ENCODE measurements at regions of chr10 and their contacts with region 1.

Region 1: DNA sequence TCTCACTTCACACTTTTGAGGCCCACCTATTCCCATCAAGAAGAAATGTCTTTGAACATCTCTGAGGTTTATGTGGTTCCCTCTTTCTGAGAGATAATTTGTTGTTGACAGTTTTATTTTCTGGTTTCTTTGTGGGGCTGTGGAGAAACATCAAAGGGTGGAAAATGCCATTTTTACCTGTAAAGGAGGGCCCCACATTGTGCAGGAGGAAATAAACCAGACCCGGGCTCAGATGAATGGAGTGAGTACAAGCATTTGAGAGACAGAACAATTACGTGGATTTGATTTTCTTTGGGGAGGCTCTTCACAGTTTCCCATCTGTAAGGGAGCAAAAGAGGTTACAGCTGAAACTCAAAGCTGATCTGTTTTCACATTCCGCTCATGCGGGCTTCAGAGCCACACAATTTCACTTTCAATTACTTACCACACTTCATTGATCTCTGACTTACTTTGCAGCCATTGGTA is 29.8 kb downstream of the ITPRIP start:
- DNase-seq: no peak
- H3K4me3 ChIP-seq: no peak overlapping the region
- H3K27ac ChIP-seq: peak overlapping the region in 1 of 2 experiments; percentile 26; a peak in 1 of 4 replicates
- H3K4me1 ChIP-seq: peaks cover 10 to 19% of the 10 kb centered on the region in 2 experiments; a peak in 3 of 4 replicates
- H3K27me3 ChIP-seq: no peaks in the 10 kb centered on the region
- CTCF ChIP-seq: no peak
- EP300 ChIP-seq: no peak
- RAD21 ChIP-seq: no peak

Region 2: DNA sequence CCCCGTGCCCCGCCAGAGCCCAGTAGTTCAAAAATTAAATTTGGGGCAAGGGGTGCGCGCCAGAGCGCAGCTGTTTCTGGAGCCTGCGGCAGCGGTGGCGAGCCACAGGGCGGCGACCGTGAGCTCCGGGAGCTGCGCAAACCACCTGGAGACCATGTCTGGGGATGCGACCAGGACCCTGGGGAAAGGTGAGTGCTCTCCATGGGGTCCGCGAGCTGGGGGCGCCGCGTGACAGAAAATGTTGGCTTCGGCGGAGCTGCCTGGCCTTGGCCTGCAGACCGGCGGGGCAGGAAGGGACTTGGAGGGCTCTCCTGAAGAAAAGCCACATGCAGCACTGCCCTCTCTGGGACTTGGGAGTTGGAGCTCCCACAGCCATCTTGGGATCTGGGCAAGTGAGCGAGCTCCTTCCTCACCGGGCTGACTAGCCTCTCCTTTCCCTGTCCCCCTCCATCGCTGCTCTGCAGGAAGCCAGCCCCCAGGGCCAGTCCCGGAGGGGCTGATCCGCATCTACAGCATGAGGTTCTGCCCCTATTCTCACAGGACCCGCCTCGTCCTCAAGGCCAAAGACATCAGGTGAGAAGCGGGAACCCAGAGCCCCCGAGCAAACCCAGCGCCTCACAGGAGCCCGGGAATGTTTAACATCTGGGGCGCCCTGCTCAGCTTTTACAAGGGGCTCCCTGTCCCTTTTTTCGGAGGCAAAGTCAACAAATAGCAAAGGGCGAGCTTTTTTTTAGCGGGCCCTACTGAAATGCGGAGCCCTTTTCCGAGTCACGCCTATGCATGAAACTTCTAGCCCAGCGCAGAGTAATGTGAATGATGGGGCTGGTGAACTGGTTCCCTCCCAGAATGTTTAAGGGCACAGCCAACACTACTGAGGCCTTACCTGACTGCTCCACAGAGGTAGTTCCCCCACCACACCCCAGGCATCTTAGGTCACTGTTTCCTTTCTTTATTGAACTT is 33.4 kb before region 1 on chr10:
- CTCF ChIA-PET with region 1: interaction called, 20 read pairs
- POLR2A ChIA-PET with region 1: no interaction called
- DNase-seq: peak; percentile 79
- H3K4me3 ChIP-seq: peak overlapping the region in 1 of 2 experiments; percentile 41; a peak in 1 of 4 replicates
- H3K27ac ChIP-seq: peak overlapping the region in 1 of 2 experiments; percentile 76; a peak in 1 of 4 replicates
- H3K4me1 ChIP-seq: peaks cover 2 to 11% of the 10 kb centered on the region in 2 experiments; a peak in 2 of 4 replicates
- H3K27me3 ChIP-seq: no peaks in the 10 kb centered on the region
- CTCF ChIP-seq: peak; percentile 53
- EP300 ChIP-seq: no peak
- RAD21 ChIP-seq: peak; percentile 39

Region 3: GRCh38 chr10:104322416-104322782 is 13.9 kb after region 1 on chr10:
- CTCF ChIA-PET with region 1: interaction called, 21 read pairs
- POLR2A ChIA-PET with region 1: no interaction called
- DNase-seq: peak; percentile 50
- H3K4me3 ChIP-seq: no peak overlapping the region
- H3K27ac ChIP-seq: peak overlapping the region in 1 of 2 experiments; percentile 41; a peak in 1 of 4 replicates
- H3K4me1 ChIP-seq: peaks cover 26 to 45% of the 10 kb centered on the region in 2 experiments; a peak in 3 of 4 replicates
- H3K27me3 ChIP-seq: no peaks in the 10 kb centered on the region
- CTCF ChIP-seq: no peak
- EP300 ChIP-seq: no peak
- RAD21 ChIP-seq: no peak

Region 4: GRCh38 chr10:104337974-104338735 is 29.7 kb after region 1 on chr10 and contains the start of gene ITPRIP:
- CTCF ChIA-PET with region 1: interaction called, 38 read pairs
- POLR2A ChIA-PET with region 1: no interaction called
- DNase-seq: peak; percentile 86
- H3K4me3 ChIP-seq: peak within 1 kb of the TSS; percentile 78 to 94
- H3K27ac ChIP-seq: peak within 1 kb of the TSS; percentile 78 to 98
- H3K4me1 ChIP-seq: peaks cover 16 to 22% of the 10 kb centered on the region in 2 experiments; a peak in 2 of 4 replicates
- H3K27me3 ChIP-seq: no peaks in the 10 kb centered on the region
- CTCF ChIP-seq: peak; percentile 38
- EP300 ChIP-seq: peak in 1 of 2 experiments; percentile 34; a peak in 1 of 4 replicates
- RAD21 ChIP-seq: no peak
- polyA plus RNA-seq, gene ITPRIP: 20.2 and 22.1 TPM in 2 replicates

Region 5: GRCh38 chr10:104353325-104354048 is 45.0 kb after region 1 on chr10 and contains the start of gene CFAP58:
- CTCF ChIA-PET with region 1: interaction called, 152 read pairs
- POLR2A ChIA-PET with region 1: no interaction called
- DNase-seq: peak; percentile 89
- H3K4me3 ChIP-seq: peak within 1 kb of the TSS; percentile 64 to 66
- H3K27ac ChIP-seq: 0 out of 4 replicates have a peak within 1 kb of the TSS, but pooled peaks of 1 of the 2 experiments have one; percentile 31
- H3K4me1 ChIP-seq: peaks cover 5 to 13% of the 10 kb centered on the region in 2 experiments; a peak in 3 of 4 replicates
- H3K27me3 ChIP-seq: no peaks in the 10 kb centered on the region
- CTCF ChIP-seq: peak; percentile 63
- EP300 ChIP-seq: no peak
- RAD21 ChIP-seq: peak; percentile 9; the same call in 1 of the 2 replicates
- polyA plus RNA-seq, gene CFAP58: 0.38 and 0.47 TPM in 2 replicates